ENCODE measurements at regions of chr2 and their contacts with region 1.

Region 1: DNA sequence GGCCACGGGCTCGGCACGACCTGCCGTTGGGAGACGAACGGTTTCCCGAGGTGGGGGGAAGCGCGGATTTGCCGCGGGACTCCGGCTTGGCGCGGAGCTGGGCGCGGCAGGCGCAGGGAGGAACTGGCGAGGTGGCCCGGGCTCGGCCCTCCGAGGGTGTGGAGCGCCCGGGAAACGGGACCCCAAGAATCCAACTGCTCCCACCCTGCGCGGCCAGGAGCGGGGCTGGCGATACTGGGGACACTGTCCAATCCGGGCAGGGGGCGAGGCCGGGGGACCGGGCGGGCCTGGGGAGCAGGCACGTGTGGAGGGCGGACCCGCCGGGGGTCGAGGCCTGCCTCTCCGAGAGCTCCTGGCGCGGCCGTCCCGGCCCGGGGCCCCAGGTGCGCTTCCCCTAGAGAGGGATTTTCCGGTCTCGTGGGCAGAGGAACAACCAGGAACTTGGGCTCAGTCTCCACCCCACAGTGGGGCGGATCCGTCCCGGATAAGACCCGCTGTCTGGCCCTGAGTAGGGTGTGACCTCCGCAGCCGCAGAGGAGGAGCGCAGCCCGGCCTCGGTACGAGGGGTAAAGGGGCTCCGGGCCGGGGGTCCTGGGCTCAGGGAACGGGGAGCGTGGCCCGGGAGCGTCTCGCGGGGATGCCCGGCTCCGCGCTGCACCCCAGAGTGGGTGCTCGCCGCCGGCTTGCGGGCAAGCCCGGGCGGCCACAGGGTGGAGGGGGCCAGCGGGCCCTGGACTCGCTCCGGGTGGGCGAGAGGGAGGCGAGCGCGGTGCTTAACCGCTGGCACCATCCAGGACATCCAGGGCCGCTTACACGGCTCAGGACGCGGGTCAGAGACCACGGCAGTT is at the start of gene ANXA4:
- DNase-seq: peak; percentile 90
- ATAC-seq: peak; percentile 90
- H3K4me3 ChIP-seq: peak within 1 kb of the TSS; percentile 77 to 83 (median 79)
- H3K27ac ChIP-seq: peak within 1 kb of the TSS; percentile 94
- H3K4me1 ChIP-seq: peaks cover 56% of the 10 kb centered on the region
- H3K27me3 ChIP-seq: no peaks in the 10 kb centered on the region; a peak in 1 of 5 replicates
- CTCF ChIP-seq: no peak; the same call in 1 of the 2 replicates
- EP300 ChIP-seq: peak in 1 of 2 experiments; percentile 23; a peak in 1 of 4 replicates
- POLR2A ChIP-seq: peak; percentile 85 to 92
- RAD21 ChIP-seq: peak; percentile 11; the same call in 1 of the 2 replicates
- total RNA-seq, gene ANXA4: 155 and 237 TPM in 2 replicates

Region 2: DNA sequence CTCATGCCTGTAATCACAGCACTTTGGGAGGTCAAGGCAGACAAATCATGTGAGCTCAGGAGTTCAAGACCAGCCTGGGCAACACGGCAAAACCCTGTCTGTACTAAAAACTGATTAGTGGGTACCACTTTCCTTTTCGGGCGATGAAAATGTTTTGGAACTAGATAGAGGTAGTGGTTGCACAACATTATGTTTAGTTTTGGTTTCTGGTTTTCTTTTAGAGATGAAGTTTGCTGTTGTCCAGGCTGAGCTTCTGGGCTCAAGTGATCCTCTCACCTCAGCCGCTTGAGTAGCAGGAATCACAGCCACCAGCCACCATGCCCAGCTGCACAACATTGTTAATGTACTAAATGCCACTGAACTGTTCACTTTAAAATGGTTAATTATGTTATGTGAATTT is 125.9 kb before region 1 on chr2:
- CTCF ChIA-PET with region 1: no interaction called
- POLR2A ChIA-PET with region 1: no interaction called
- in situ Hi-C with region 1: no loop called
- intact Hi-C with region 1: no loop called
- DNase-seq: no peak
- ATAC-seq: no peak
- H3K4me3 ChIP-seq: no peak overlapping the region
- H3K27ac ChIP-seq: no peak overlapping the region
- H3K4me1 ChIP-seq: peaks cover 13% of the 10 kb centered on the region
- H3K27me3 ChIP-seq: no peaks in the 10 kb centered on the region
- CTCF ChIP-seq: no peak
- EP300 ChIP-seq: no peak
- POLR2A ChIP-seq: no peak
- RAD21 ChIP-seq: no peak

Region 3: DNA sequence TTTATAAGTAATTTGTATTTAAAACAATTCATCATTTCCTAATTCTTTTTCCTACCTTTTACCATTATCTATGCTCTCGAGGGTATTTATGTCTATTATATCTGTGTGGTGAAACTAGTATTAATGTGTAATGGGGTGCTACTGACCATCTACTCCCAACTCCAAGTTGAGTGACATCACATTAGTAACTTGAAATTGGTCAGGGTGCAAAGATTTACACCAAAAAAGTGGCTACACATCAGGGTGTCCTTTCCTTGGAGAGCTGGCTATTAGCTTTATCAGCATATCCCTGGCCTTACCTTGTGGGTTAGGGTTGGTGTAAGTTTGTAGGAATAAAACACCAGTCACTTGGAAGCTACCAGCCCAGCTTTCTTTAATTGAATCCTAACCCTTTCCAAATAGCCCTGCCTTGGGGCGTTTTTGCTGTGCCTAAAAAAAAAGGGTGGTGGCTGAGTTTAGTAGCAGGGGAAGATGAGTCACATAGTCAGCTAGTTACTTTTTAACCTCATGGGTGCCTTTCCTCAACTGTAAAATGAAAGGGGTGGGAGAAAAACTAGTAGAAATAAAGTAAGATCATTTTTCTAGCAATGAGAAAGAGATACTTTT is 14.1 kb after region 1 on chr2:
- CTCF ChIA-PET with region 1: no interaction called
- POLR2A ChIA-PET with region 1: interaction called, 142 read pairs
- in situ Hi-C with region 1: no loop called
- intact Hi-C with region 1: loop called (anchors 1 kb)
- DNase-seq: peak; percentile 48
- ATAC-seq: peak; percentile 72
- H3K4me3 ChIP-seq: no peak overlapping the region; a peak in 1 of 6 replicates
- H3K27ac ChIP-seq: peak overlapping the region; percentile 35
- H3K4me1 ChIP-seq: peaks cover 62% of the 10 kb centered on the region
- H3K27me3 ChIP-seq: no peaks in the 10 kb centered on the region
- CTCF ChIP-seq: no peak
- EP300 ChIP-seq: no peak
- POLR2A ChIP-seq: no peak
- RAD21 ChIP-seq: no peak

Region 4: DNA sequence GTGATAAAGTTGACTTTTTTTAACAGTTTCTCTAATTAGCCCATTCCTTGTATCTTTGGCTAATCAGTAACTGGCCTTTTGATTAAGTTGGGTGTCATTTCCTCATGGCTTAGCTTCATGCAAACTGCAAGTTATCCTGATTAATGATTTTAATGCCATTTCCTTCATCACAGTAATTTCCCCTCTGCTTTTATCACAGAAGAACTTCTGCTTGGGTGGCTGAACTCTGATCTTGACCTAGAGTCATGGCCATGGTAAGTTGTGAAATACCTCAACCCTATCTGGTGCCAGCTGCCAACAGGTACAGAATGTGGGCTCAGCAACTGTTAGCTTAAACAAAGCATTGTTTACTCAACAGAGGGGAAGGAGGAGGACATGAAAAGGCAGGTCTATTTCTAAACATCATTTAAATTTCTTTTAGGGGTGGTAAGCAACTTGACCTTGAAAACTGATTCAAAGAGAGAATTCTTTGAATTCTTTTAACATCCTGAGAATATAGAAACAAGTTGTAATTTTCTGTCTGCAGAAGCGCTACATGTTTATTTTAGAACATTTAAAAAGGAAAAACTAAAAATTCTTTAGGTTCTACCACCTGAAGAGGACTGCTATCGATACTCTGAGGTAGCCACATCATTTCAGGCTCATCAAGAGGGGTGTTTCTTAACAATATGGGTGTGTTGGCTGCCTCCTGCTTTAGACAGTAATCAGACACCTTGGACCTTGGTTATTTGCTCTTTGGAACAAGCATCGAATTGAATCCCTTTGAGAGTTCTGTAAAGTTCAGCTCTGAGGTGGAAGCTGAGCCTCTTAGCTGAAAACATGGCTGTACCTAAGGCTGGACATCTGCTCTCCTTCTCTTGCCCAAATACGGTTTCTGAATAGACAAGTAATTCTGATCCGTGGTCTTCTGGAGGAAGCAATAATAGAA is 39.7 kb after region 1 on chr2:
- CTCF ChIA-PET with region 1: no interaction called
- POLR2A ChIA-PET with region 1: interaction called, 67 read pairs
- in situ Hi-C with region 1: no loop called
- intact Hi-C with region 1: loop called (anchors 2 kb)
- DNase-seq: peak; percentile 97
- ATAC-seq: peak; percentile 91
- H3K4me3 ChIP-seq: peak overlapping the region in 2 of 3 experiments; percentile 14 to 26; a peak in 2 of 6 replicates
- H3K27ac ChIP-seq: peak overlapping the region; percentile 66
- H3K4me1 ChIP-seq: peaks cover 66% of the 10 kb centered on the region
- H3K27me3 ChIP-seq: no peaks in the 10 kb centered on the region
- CTCF ChIP-seq: no peak
- EP300 ChIP-seq: peak; percentile 95 to 99; a peak in 3 of 4 replicates
- POLR2A ChIP-seq: peak in 1 of 2 experiments; percentile 37; a peak in 2 of 4 replicates
- RAD21 ChIP-seq: no peak

Region 5: DNA sequence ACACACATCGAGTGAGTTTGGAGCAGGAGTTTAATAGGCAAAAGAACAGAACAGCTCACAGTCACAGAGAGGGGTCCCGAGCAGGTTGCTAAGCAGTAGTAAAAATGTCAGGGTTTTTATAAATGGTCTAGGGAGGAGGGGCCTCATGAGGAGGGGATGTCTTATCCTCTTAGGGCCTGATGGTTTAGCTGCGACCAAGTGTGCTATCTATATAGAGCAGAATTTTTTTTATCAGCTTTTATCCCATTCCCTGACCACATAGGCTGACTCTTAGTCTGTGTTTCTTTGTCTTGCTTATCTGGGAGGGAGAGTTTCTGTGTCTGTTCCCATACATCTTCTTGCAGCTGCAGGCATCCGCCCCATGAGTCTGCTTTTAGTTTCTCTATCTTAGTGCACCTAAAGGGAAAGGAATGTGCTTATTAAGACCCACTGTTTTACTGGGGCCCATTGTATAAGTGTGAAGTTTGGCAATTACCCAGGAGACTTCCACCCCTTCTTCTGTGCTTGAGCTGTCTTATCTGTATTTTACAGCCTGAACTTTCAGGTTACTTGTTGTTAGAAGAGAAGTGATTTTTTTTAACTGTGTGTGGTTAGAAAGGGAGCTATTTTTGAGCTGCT is 57.2 kb after region 1 on chr2:
- CTCF ChIA-PET with region 1: no interaction called
- POLR2A ChIA-PET with region 1: interaction called, 10 read pairs
- in situ Hi-C with region 1: no loop called
- intact Hi-C with region 1: no loop called
- DNase-seq: no peak
- ATAC-seq: no peak
- H3K4me3 ChIP-seq: no peak overlapping the region
- H3K27ac ChIP-seq: no peak overlapping the region
- H3K4me1 ChIP-seq: no peaks in the 10 kb centered on the region
- H3K27me3 ChIP-seq: no peaks in the 10 kb centered on the region
- CTCF ChIP-seq: no peak
- EP300 ChIP-seq: no peak
- POLR2A ChIP-seq: no peak
- RAD21 ChIP-seq: no peak

Region 6: DNA sequence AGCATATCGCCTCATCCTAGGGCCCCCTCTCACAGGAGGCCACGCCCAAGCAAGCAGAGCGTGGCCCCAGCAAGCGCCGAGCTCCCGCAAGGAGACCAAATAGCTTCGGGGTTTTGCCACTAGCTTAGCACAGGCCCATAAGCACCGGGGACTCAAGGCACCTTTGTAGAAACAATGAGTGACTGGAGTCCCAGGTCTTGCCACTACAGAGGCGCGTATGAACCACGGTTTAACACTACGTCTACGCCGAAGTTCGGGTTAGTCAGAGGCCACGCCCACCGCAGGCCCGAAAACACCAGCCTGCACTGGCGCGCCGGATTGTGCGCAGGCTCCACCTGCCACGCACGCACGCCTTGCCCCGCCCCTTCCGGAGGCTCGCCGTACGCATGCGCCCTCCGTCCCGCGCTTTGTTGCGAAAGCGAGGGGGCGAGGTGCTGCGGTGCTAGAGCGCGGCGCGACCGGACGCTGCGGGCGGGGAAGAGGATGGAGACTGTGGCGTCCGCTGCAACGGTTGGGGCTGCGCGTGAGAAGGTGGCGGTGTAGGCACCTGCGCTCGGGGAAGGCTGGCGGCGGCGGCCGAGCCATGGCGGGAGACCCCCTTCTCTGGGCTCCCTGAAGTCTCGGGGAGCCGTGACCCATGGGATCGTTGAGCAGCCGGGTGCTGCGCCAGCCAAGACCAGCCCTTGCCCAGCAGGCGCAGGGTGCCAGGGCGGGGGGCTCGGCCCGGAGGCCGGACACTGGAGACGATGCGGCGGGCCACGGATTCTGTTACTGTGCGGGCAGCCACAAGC is 87.6 kb after region 1 on chr2 and contains the start of gene GMCL1:
- CTCF ChIA-PET with region 1: no interaction called
- POLR2A ChIA-PET with region 1: interaction called, 29 read pairs
- in situ Hi-C with region 1: no loop called
- intact Hi-C with region 1: loop called (anchors 1 kb)
- DNase-seq: peak; percentile 94
- ATAC-seq: peak; percentile 91
- H3K4me3 ChIP-seq: peak within 1 kb of the TSS; percentile 82 to 96 (median 93)
- H3K27ac ChIP-seq: peak within 1 kb of the TSS; percentile 93
- H3K4me1 ChIP-seq: peaks cover 54% of the 10 kb centered on the region
- H3K27me3 ChIP-seq: no peaks in the 10 kb centered on the region; a peak in 1 of 5 replicates
- CTCF ChIP-seq: peak; percentile 38
- EP300 ChIP-seq: peak in 1 of 2 experiments; percentile 49; a peak in 2 of 4 replicates
- POLR2A ChIP-seq: peak; percentile 97
- RAD21 ChIP-seq: no peak; the same call in 1 of the 2 replicates
- total RNA-seq, gene GMCL1: 18.7 and 24.0 TPM in 2 replicates